CD4-positive, alpha-beta memory T cell (primary cell): ENCODE measurements at regions of chr11 and their contacts with region 1.

Region 1: DNA sequence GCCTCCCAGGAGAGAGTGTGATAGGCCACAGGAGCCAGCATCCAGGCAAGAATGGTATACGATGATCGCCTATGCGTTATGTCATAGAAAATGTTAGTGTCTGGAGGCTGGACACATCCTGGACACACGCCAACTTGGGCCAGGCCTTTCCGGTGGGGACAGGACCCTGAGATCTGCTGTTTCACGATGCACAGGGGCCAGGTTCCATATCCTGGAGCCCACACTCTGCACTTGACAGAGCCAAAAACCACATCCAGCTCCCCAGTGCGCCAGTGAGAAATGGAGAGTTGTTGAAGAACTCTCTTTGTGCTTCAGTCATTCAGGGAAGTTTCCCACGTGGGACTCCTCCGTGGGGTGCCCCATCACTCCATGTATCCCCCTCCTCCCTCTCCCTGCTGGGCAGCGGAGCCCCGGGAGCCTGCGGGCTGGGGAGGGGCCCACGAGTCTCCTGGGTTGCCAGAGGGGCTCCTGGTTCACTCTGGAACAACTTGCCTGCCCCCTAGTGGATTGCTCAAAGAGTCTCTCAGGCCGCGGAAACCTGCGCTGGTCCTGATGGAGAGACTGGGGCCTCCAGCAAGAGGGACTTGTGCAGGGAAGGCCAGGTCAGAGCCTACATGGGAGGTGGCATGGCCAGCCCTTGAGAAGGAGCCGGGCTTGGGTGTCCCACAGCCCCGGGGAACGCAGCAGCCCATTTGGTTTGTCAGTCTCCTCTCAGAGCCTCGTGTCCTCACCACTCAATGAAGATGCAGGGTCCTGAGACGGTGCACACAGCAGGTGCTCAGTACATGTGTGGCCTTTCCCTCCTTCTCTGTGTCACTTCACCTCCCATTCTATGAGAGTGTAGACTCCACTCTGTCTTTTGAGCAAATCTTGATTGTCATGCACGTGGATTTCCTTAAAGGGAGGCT is 10.2 kb upstream of the LRRC32 start:
- DNase-seq: peak; percentile 35 to 54 (median 47)
- H3K4me3 ChIP-seq: no peak overlapping the region
- H3K4me3 Mint-ChIP-seq: no peak overlapping the region
- H3K27ac ChIP-seq: no peak overlapping the region
- H3K27ac Mint-ChIP-seq: no peak overlapping the region
- H3K4me1 ChIP-seq: no peaks in the 10 kb centered on the region
- H3K4me1 Mint-ChIP-seq: no peaks in the 10 kb centered on the region
- H3K27me3 ChIP-seq: no peaks in the 10 kb centered on the region
- H3K27me3 Mint-ChIP-seq: peaks cover 5 to 6% of the 10 kb centered on the region in 2 donors

Region 2: GRCh38 chr11:75896843-75897419 is 783.8 kb before region 1 on chr11:
- CTCF ChIA-PET with region 1: no interaction called
- POLR2A ChIA-PET with region 1: no interaction called
- intact Hi-C with region 1: loop called (anchors 10 kb)
- DNase-seq: peak in 4 of 5 donors; percentile 22 to 42 (median 30)
- H3K4me3 ChIP-seq: no peak overlapping the region
- H3K4me3 Mint-ChIP-seq: no peak overlapping the region
- H3K27ac ChIP-seq: no peak overlapping the region
- H3K27ac Mint-ChIP-seq: no peak overlapping the region
- H3K4me1 ChIP-seq: no peaks in the 10 kb centered on the region
- H3K4me1 Mint-ChIP-seq: peaks cover 0 to 4% (median 3%) of the 10 kb centered on the region in 4 donors
- H3K27me3 ChIP-seq: no peaks in the 10 kb centered on the region
- H3K27me3 Mint-ChIP-seq: no peaks in the 10 kb centered on the region

Region 3: GRCh38 chr11:76551400-76551799 is 129.4 kb before region 1 on chr11:
- CTCF ChIA-PET with region 1: interaction called, 7 read pairs
- POLR2A ChIA-PET with region 1: no interaction called
- intact Hi-C with region 1: loop called (anchors 2 kb)
- DNase-seq: no peak
- H3K4me3 ChIP-seq: no peak overlapping the region
- H3K4me3 Mint-ChIP-seq: no peak overlapping the region
- H3K27ac ChIP-seq: no peak overlapping the region
- H3K27ac Mint-ChIP-seq: no peak overlapping the region
- H3K4me1 ChIP-seq: no peaks in the 10 kb centered on the region
- H3K4me1 Mint-ChIP-seq: peaks cover 0 to 6% (median 3%) of the 10 kb centered on the region in 4 donors
- H3K27me3 ChIP-seq: no peaks in the 10 kb centered on the region
- H3K27me3 Mint-ChIP-seq: no peaks in the 10 kb centered on the region

Region 4: GRCh38 chr11:76734456-76735420 is 54.0 kb after region 1 on chr11:
- CTCF ChIA-PET with region 1: no interaction called
- POLR2A ChIA-PET with region 1: no interaction called
- intact Hi-C with region 1: no loop called
- DNase-seq: no peak
- H3K4me3 ChIP-seq: no peak overlapping the region
- H3K4me3 Mint-ChIP-seq: no peak overlapping the region
- H3K27ac ChIP-seq: no peak overlapping the region
- H3K27ac Mint-ChIP-seq: no peak overlapping the region
- H3K4me1 ChIP-seq: no peaks in the 10 kb centered on the region
- H3K4me1 Mint-ChIP-seq: no peaks in the 10 kb centered on the region
- H3K27me3 ChIP-seq: no peaks in the 10 kb centered on the region
- H3K27me3 Mint-ChIP-seq: peaks cover 3 to 5% of the 10 kb centered on the region in 2 donors